Activated B cell treated with CpG ODN at 0.5 μM for 24 hours (primary cell): ENCODE measurements at regions of chr3 and their contacts with region 1.

Region 1: GRCh38 chr3:108221911-108222852 is at the start of gene IFT57:
- DNase-seq: peak; percentile 95
- ATAC-seq: peak; percentile 91
- H3K4me3 Mint-ChIP-seq: peak within 1 kb of the TSS; percentile 100
- H3K27ac Mint-ChIP-seq: peak within 1 kb of the TSS; percentile 100
- H3K4me1 Mint-ChIP-seq: peaks cover 66% of the 10 kb centered on the region
- H3K27me3 Mint-ChIP-seq: no peaks in the 10 kb centered on the region
- CTCF ChIP-seq: no peak
- total RNA-seq, gene IFT57: 63.2 and 64.9 TPM in 2 replicates

Region 2: DNA sequence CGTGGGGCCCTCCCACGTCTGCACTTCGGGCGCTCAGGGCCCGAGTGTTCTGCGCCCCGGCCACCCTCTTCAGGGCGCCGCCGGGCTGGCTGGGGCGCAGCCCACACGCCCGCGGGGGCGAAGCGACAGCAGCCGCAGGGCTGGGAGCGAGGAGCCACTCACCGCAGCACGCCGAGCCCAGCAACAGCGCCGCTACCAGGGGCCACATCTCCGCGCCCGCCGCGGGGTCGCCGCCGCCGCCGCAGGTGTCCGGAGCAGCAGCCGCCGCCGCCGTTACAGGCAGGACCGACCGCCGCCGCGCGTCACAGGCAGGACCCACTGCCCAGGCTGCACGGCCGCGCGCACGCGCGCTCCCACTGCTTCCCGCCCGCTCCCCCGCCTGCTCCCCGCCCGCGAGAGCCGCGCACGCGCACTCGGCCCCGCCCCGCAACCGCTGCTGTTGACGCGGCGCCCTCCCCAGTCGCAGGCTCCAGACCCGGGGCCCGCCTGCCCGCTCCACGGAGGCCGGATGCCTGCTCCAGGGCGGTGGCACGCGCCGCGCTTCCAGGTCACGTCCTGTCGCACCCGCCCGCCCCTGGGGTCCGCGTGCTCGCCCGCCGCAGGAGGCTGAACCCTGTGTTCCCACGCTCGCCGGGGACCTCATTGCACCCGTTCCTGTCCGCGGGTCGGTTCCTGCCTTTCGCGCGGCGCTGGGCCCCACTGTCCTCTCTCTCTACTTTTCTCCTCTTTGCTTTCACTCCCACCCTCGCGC is 131.3 kb before region 1 on chr3 and contains the start of gene CD47:
- CTCF ChIA-PET with region 1: no interaction called
- POLR2A ChIA-PET with region 1: interaction called, 21 read pairs
- intact Hi-C with region 1: loop called (anchors 1 kb)
- DNase-seq: peak; percentile 97
- ATAC-seq: peak; percentile 81
- H3K4me3 Mint-ChIP-seq: peak within 1 kb of the TSS; percentile 97
- H3K27ac Mint-ChIP-seq: peak within 1 kb of the TSS; percentile 97
- H3K4me1 Mint-ChIP-seq: peaks cover 33% of the 10 kb centered on the region
- H3K27me3 Mint-ChIP-seq: no peaks in the 10 kb centered on the region
- CTCF ChIP-seq: no peak
- total RNA-seq, gene CD47: 158 and 184 TPM in 2 replicates

Region 3: DNA sequence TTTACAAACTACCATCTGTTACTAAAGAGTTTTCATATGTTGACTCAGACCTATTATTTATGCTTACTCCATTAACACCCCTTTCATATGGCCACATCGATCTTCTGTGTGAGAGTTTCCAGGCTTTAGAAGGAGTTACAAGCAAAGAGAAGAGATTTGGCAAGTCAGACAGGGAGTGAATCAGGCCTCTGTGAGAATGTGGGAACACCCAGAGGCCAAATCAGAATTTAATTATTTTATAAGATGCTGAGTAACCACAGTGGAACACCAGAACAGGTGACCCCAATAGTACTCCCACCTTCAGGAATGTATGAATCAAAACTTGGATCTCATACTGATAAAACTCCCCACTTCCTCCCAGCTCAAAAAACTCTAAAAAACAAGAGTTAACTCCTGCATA is 42.0 kb before region 1 on chr3:
- CTCF ChIA-PET with region 1: no interaction called
- POLR2A ChIA-PET with region 1: interaction called, 8 read pairs
- intact Hi-C with region 1: loop called (anchors 5 kb)
- DNase-seq: no peak
- ATAC-seq: no peak
- H3K4me3 Mint-ChIP-seq: no peak overlapping the region
- H3K27ac Mint-ChIP-seq: no peak overlapping the region
- H3K4me1 Mint-ChIP-seq: peaks cover 45% of the 10 kb centered on the region
- H3K27me3 Mint-ChIP-seq: no peaks in the 10 kb centered on the region
- CTCF ChIP-seq: no peak

Region 4: GRCh38 chr3:108292905-108293328 is 70.7 kb after region 1 on chr3:
- CTCF ChIA-PET with region 1: no interaction called
- POLR2A ChIA-PET with region 1: interaction called, 6 read pairs
- intact Hi-C with region 1: loop called (anchors 1 kb)
- DNase-seq: no peak
- ATAC-seq: peak; percentile 32
- H3K4me3 Mint-ChIP-seq: peak overlapping the region; percentile 19
- H3K27ac Mint-ChIP-seq: peak overlapping the region; percentile 41
- H3K4me1 Mint-ChIP-seq: peaks cover 51% of the 10 kb centered on the region
- H3K27me3 Mint-ChIP-seq: no peaks in the 10 kb centered on the region
- CTCF ChIP-seq: no peak

Region 5: GRCh38 chr3:108538083-108538482 is 315.9 kb after region 1 on chr3:
- CTCF ChIA-PET with region 1: no interaction called
- POLR2A ChIA-PET with region 1: no interaction called
- intact Hi-C with region 1: no loop called
- DNase-seq: no peak
- ATAC-seq: no peak
- H3K4me3 Mint-ChIP-seq: no peak overlapping the region
- H3K27ac Mint-ChIP-seq: no peak overlapping the region
- H3K4me1 Mint-ChIP-seq: no peaks in the 10 kb centered on the region
- H3K27me3 Mint-ChIP-seq: peaks cover 11% of the 10 kb centered on the region
- CTCF ChIP-seq: no peak

Region 6: DNA sequence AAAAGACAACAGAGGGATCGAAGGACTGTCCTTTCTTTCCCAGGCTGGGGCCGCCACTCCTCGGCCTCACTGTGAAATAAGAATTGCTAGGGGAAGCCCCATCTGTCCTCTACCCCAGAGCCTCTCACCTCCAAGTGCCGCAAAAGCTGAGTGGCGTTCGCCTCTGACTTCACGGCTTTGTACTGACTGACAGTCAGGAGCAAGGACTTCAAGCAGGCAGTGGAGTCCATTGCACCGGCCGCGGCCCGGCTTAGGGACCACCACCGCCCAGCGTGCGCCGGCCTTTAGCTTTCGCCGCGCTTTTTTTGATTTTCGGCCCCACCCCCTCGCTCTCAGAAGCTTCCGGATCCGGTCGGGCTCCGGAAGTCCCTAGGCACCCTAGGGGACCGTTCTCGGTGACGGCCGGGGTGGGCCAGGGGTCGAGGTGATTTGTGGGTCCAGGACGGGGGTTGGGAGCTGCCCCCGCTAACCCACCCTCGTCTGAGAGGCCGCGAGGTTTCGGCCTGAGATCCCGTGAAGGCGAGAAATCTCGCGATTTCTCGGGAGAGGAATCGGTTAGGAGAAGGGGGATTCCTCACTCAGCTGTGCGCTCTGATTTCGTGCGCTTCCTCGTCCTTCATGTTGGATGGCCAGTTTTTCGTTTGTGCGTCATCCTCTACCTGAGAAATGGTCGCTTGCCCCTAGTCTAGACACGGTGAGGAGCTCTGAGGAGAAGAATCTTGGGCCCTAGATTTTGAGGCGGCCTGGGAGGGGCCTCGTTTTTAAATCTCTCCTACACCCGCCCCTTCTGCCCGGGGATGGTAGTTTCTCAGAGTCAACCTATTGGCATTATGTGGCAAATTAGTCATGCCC is 367.2 kb after region 1 on chr3 and contains the starts of genes CIP2A and DZIP3:
- CTCF ChIA-PET with region 1: no interaction called
- POLR2A ChIA-PET with region 1: interaction called, 5 read pairs
- intact Hi-C with region 1: loop called (anchors 1 kb)
- DNase-seq: peak; percentile 85
- ATAC-seq: peak; percentile 92
- H3K4me3 Mint-ChIP-seq: peak within 1 kb of the TSS; percentile 97
- H3K27ac Mint-ChIP-seq: peak within 1 kb of the TSS; percentile 100
- H3K4me1 Mint-ChIP-seq: peaks cover 33% of the 10 kb centered on the region
- H3K27me3 Mint-ChIP-seq: no peaks in the 10 kb centered on the region
- CTCF ChIP-seq: no peak
- total RNA-seq, gene CIP2A: 11.3 and 13.1 TPM in 2 replicates
- total RNA-seq, gene DZIP3: 15.5 and 16.7 TPM in 2 replicates